ENCODE measurements at regions of chr20 and their contacts with region 1.

Region 1: DNA sequence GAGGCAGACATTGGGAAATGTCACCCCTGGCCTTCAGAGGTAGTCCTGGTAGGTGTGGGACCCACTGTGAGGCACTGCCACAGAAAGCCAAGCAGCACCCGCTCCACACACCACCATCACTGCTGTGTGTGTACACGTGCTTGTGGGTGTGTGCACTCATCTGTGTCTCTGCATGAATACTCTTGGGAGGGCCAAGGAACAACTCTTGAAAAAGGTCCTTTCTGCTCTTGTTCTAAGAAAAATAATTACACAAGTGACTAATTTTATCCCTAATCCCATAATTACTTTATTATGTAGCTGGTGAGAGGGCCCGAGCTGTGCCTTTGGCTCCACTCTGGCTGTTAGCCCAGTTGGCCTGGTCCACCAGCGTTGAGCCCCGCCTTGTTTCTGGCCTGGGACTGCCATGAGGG is 21.7 kb upstream of the EPB41L1 start:
- DNase-seq: no peak
- H3K4me3 ChIP-seq: no peak overlapping the region
- H3K27ac ChIP-seq: peak overlapping the region in 1 of 2 donors; percentile 20
- H3K4me1 ChIP-seq: no peaks in the 10 kb centered on the region
- H3K27me3 ChIP-seq: no peaks in the 10 kb centered on the region
- CTCF ChIP-seq: no peak
- POLR2A ChIP-seq: no peak

Region 2: DNA sequence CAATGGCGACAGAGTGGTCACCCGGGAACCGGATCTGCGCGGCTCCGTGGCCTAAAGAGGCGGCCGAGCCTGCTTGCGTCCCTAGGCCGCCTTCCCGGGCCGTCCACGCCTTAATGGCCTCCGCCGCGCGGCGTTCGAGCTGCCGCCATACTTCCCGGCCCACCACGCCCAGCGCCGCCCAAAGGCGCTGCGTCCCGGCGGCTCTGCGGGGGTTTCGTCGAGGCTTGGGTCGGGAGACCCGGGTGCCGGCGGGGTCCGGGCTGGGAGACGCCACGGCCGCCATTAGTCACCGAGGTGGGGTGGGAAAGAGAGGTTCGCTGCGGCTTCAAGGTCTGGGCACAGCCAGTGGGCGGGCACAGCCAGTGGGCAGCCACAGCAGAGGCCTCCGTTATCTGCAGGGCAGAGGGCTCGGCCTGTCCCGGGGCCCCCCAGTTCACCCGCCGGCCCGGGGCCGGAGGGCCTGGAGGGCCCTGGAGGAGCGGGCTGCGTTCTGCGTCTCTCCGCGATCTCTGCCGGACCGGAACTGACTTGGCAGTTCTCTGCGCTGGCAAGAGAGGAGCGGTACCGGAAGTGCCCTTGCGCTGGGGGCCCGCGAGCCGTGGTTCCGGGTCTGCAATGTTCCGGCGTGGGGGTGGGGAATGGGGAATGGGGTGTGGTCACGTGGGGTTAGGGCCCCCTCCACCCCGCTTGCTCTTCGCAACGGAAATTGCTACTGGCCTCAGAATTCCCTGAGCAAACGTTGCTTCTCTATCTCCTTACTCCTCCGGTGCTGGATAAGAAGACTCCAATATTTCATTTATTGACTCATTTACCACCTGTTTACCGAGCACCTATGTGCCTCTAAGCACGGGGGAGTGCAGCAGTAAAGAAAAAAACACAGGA is 82.1 kb before region 1 on chr20:
- intact Hi-C with region 1: loop called (anchors 10 kb)
- DNase-seq: peak; percentile 86 to 93
- H3K4me3 ChIP-seq: peak overlapping the region; percentile 86 to 95 (median 89)
- H3K27ac ChIP-seq: peak overlapping the region; percentile 96 to 99
- H3K4me1 ChIP-seq: no peaks in the 10 kb centered on the region
- H3K27me3 ChIP-seq: no peaks in the 10 kb centered on the region
- CTCF ChIP-seq: no peak
- POLR2A ChIP-seq: peak; percentile 94